MCF 10A (cell line): ENCODE measurements at regions of chr22 and their contacts with region 1.

Region 1: GRCh38 chr22:39152511-39153219 is at the start of gene CBX7:
- DNase-seq: peak; percentile 76
- H3K4me3 Mint-ChIP-seq: peak within 1 kb of the TSS; percentile 72
- H3K27ac Mint-ChIP-seq: no peak within 1 kb of the TSS
- H3K4me1 Mint-ChIP-seq: no peaks in the 10 kb centered on the region
- H3K27me3 Mint-ChIP-seq: peaks cover 36% of the 10 kb centered on the region
- CTCF ChIP-seq: no peak
- total RNA-seq, gene CBX7: 5.3 and 6.2 TPM in 2 replicates

Region 2: DNA sequence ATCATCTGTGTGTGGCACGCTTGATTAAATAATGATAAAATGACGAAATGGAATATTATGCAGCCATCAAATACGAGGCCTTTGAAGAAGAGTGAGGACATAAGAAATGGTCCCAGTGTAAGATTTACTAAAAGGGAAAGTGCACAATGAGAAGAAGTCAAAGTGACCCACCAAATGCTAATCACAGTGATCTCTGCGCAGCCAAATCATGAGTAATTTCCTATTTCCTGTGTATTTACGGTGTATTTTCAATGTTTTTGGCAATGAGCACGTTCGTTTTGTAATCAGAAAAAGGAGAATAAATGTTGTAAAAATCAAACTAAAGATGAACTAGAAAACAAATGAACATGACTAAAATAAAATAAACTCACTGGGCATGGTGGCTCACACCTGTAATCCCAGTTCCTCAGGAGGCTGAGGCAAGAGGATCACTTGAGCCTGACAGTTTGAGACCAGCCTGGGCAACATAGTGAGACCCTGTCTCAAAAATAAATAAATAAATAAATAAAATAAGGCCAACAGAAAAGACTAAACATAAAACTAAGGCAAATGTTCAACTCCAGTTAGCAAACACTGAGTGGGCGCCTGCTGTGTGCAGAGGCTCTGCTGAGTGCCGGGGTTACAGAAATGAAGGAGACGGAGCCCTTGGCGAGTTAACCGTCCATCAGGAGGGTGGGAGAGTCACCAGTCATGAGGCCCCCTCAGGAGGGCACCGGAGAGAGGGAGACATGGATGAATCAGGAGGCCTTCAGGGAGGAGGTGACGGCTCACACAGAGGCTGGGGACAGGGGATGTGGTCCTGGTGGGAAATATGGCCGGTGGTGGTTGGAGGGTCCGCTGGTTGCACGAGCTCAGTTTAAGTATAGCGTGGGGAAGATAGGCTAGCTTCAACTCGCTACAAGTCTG is 25.8 kb after region 1 on chr22:
- CTCF ChIA-PET with region 1: no interaction called
- POLR2A ChIA-PET with region 1: no interaction called
- intact Hi-C with region 1: no loop called
- DNase-seq: peak; percentile 68
- H3K4me3 Mint-ChIP-seq: no peak overlapping the region
- H3K27ac Mint-ChIP-seq: no peak overlapping the region
- H3K4me1 Mint-ChIP-seq: peaks cover 34% of the 10 kb centered on the region
- H3K27me3 Mint-ChIP-seq: no peaks in the 10 kb centered on the region
- CTCF ChIP-seq: no peak

Region 3: GRCh38 chr22:39197396-39197977 is 44.8 kb after region 1 on chr22:
- CTCF ChIA-PET with region 1: no interaction called
- POLR2A ChIA-PET with region 1: no interaction called
- intact Hi-C with region 1: no loop called
- DNase-seq: no peak
- H3K4me3 Mint-ChIP-seq: no peak overlapping the region
- H3K27ac Mint-ChIP-seq: no peak overlapping the region
- H3K4me1 Mint-ChIP-seq: no peaks in the 10 kb centered on the region
- H3K27me3 Mint-ChIP-seq: no peaks in the 10 kb centered on the region
- CTCF ChIP-seq: no peak

Region 4: DNA sequence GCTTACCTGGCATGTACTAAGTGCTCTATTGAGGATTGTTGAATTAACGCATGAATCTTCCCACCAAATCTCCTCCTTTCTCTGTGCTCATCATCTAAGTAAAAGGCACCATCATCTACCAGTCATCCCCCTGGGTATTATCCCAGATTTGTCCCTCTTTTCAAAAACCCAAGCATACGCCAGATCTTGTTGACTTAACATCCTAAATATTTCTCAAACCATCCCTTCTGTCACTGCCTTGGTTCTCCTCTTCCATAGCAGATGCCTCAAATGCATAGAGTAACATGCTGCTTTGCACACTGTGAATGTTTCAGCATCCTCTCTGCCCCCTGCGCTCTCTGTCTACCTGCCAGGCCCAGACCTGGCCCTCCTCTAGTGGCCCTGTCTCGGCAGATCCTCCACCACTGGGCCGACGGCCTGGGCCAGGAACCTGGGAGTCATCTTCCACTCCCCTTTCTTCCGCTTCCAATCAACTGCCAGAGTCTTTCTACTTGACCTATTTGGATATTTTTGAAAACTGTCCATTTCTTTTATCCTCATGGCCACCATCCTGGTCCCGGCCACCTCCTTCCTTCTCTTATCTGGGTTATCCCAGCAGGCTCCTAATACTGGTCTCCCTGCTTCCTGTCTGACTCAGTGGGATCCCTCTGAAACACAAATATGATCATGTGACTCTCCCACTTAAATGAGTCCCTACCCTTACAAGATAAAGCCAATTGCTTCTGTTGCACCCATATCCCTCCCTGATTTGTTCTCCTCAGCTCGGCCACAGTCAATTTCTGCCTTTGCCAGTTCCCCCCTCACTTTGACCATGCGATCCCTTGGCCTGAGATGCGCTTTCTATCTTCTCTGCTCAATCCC is 243.5 kb after region 1 on chr22:
- CTCF ChIA-PET with region 1: no interaction called
- POLR2A ChIA-PET with region 1: no interaction called
- intact Hi-C with region 1: loop called (anchors 2 kb)
- DNase-seq: no peak
- H3K4me3 Mint-ChIP-seq: no peak overlapping the region
- H3K27ac Mint-ChIP-seq: no peak overlapping the region
- H3K4me1 Mint-ChIP-seq: no peaks in the 10 kb centered on the region
- H3K27me3 Mint-ChIP-seq: no peaks in the 10 kb centered on the region
- CTCF ChIP-seq: no peak